ENCODE measurements at regions of chr4 and their contacts with region 1.

Region 1: GRCh38 chr4:84750253-84750959 is 167.5 kb downstream of the CDS1 start:
- DNase-seq: peak; percentile 12
- ATAC-seq: peak; percentile 67; the same call in 1 of the 2 replicates
- H3K4me3 ChIP-seq: no peak overlapping the region
- H3K27ac ChIP-seq: no peak overlapping the region
- H3K4me1 ChIP-seq: no peaks in the 10 kb centered on the region
- H3K27me3 ChIP-seq: no peaks in the 10 kb centered on the region
- CTCF ChIP-seq: peak; percentile 46 to 80 (median 54); a peak in 5 of 6 replicates
- POLR2A ChIP-seq: no peak
- RAD21 ChIP-seq: peak; percentile 73

Region 2: DNA sequence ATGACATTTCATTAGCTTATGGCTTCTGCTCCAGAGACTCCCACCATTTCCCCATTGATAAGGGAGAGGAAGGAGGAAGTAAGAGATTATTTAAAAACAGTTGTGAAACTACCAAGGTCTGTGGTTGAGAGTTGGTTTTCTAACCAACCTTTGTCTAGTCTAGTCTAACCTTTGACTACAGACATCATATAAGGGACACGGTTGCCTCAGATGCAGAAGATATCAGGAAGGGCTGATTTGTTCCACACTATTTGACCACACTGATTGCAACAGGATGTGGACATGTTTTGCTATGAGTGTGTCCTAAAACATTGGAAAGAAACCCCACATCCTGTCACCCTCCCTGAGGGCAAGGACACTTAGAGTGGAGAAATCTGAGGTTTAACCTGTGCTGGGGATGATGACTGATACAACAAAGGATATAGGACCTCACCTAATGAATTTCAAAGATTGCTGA is 1518.8 kb before region 1 on chr4:
- CTCF ChIA-PET with region 1: no interaction called
- POLR2A ChIA-PET with region 1: no interaction called
- RAD21 ChIA-PET with region 1: no interaction called
- intact Hi-C with region 1: no loop called
- DNase-seq: no peak
- ATAC-seq: no peak
- H3K4me3 ChIP-seq: no peak overlapping the region
- H3K27ac ChIP-seq: no peak overlapping the region
- H3K4me1 ChIP-seq: peaks cover 0 to 22% of the 10 kb centered on the region in 2 experiments; a peak in 2 of 4 replicates
- H3K27me3 ChIP-seq: no peaks in the 10 kb centered on the region
- CTCF ChIP-seq: no peak
- POLR2A ChIP-seq: no peak
- RAD21 ChIP-seq: no peak

Region 3: GRCh38 chr4:84740057-84740456 is 10.3 kb before region 1 on chr4:
- CTCF ChIA-PET with region 1: interaction called, 13 read pairs
- POLR2A ChIA-PET with region 1: no interaction called
- RAD21 ChIA-PET with region 1: no interaction called
- intact Hi-C with region 1: no loop called
- DNase-seq: no peak
- ATAC-seq: no peak
- H3K4me3 ChIP-seq: no peak overlapping the region
- H3K27ac ChIP-seq: no peak overlapping the region
- H3K4me1 ChIP-seq: no peaks in the 10 kb centered on the region
- H3K27me3 ChIP-seq: no peaks in the 10 kb centered on the region
- CTCF ChIP-seq: no peak
- POLR2A ChIP-seq: no peak
- RAD21 ChIP-seq: no peak

Region 4: DNA sequence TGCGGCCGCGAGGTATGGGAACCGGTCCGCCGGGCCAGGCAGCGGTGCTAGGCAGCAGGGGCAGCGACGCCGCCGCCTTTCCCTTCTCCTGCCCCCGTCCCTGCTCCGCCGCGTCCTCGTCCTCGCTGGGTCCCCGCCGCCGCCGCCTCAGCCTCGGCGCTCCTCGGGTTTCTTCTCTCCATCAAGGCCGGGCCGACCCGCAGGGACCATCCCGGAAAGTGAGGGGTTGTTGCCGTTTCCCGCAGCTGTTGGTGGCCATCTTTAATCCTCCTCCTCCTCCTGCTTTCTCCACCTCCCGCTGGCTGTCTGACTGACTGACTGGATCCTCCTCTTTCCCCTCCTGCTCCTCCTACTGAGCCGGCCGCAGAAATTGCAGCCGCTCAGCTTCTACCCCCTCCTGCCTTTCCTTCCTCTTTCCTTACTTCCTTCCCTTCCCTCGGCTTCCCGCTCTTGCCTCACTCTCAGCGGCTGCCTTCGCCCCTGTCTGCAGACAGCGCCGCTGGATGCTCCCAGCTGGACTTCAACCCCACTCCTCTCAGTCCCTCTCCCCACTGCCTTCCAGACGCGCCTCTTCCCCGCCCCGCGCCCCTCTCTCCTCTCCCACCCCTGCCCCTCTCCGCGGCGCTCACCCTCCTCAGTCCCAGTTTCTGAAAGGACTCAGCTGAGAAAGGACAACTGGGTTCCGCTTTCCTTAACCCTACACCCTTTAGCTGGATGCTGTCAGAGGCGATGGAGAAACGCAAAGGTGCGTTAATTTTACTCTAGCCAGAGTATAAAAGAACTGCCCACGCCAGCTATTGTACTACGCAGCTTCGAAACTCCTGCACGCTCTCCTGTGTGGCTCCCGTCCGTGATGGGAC is 216.2 kb after region 1 on chr4 and contains the start of gene WDFY3:
- CTCF ChIA-PET with region 1: interaction called, 31 read pairs
- POLR2A ChIA-PET with region 1: no interaction called
- RAD21 ChIA-PET with region 1: interaction called, 5 to 6 read pairs
- intact Hi-C with region 1: loop called (anchors 1 kb)
- DNase-seq: peak; percentile 71
- ATAC-seq: peak; percentile 89
- H3K4me3 ChIP-seq: peak within 1 kb of the TSS; percentile 56 to 79
- H3K27ac ChIP-seq: peak within 1 kb of the TSS; percentile 88
- H3K4me1 ChIP-seq: peaks cover 4 to 18% of the 10 kb centered on the region in 2 experiments; a peak in 3 of 4 replicates
- H3K27me3 ChIP-seq: no peaks in the 10 kb centered on the region
- CTCF ChIP-seq: no peak
- POLR2A ChIP-seq: peak; percentile 43
- RAD21 ChIP-seq: 0 out of 2 replicates have a peak, but pooled peaks have one; percentile 18
- total RNA-seq, gene WDFY3: 39.9 TPM

Measured in HCT116 (cell line).